H1 (cell line): ENCODE measurements at regions of chr4 and their contacts with region 1.

Region 1: GRCh38 chr4:15197005-15197404 is 194.7 kb downstream of the CPEB2 start:
- DNase-seq: peak in 1 of 2 experiments; percentile 46
- H3K4me3 ChIP-seq: no peak overlapping the region
- H3K27ac ChIP-seq: no peak overlapping the region
- H3K4me1 ChIP-seq: peaks cover 0 to 9% (median 4%) of the 10 kb centered on the region in 4 experiments; a peak in 4 of 7 replicates
- H3K27me3 ChIP-seq: no peaks in the 10 kb centered on the region
- CTCF ChIP-seq: peak in 2 of 3 experiments; percentile 30 to 60; a peak in 2 of 4 replicates
- EP300 ChIP-seq: no peak
- POLR2A ChIP-seq: no peak
- RAD21 ChIP-seq: peak; percentile 62 to 72

Region 2: DNA sequence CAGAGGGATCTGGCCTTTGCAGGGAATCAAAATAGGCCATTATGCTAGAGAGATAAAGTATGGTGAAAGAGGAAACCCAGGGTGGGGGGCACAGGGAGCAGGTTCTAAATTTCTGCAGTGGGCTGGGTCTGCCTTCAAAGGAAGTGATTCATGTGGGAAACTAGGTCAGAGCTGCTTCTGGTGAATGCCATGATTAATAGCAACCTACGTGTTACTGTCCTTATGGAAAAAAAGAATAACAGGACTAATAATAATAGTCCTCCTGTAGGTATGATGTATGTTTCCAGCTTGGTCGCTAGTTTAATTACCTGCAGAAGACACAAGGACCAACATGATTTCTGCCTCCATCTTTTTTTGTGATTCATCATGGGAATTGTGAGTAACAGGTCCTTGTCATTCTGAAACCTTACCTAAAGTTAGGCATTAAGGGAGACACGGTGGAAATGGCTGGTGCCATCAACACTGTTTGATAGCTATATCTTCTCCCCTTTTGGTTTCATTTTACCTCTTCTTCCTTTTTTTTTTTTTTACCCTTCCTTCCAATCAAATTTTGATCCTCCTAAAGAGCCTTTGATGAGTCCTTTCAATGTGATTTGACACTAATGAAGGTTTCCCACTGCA is 14.3 kb before region 1 on chr4:
- CTCF ChIA-PET with region 1: interaction called, 16 read pairs
- POLR2A ChIA-PET with region 1: interaction called, 3 read pairs
- DNase-seq: no peak
- H3K4me3 ChIP-seq: no peak overlapping the region
- H3K27ac ChIP-seq: no peak overlapping the region
- H3K4me1 ChIP-seq: peaks cover 0 to 3% (median 0%) of the 10 kb centered on the region in 4 experiments; a peak in 1 of 7 replicates
- H3K27me3 ChIP-seq: no peaks in the 10 kb centered on the region
- CTCF ChIP-seq: no peak
- EP300 ChIP-seq: no peak
- POLR2A ChIP-seq: no peak
- RAD21 ChIP-seq: no peak

Region 3: DNA sequence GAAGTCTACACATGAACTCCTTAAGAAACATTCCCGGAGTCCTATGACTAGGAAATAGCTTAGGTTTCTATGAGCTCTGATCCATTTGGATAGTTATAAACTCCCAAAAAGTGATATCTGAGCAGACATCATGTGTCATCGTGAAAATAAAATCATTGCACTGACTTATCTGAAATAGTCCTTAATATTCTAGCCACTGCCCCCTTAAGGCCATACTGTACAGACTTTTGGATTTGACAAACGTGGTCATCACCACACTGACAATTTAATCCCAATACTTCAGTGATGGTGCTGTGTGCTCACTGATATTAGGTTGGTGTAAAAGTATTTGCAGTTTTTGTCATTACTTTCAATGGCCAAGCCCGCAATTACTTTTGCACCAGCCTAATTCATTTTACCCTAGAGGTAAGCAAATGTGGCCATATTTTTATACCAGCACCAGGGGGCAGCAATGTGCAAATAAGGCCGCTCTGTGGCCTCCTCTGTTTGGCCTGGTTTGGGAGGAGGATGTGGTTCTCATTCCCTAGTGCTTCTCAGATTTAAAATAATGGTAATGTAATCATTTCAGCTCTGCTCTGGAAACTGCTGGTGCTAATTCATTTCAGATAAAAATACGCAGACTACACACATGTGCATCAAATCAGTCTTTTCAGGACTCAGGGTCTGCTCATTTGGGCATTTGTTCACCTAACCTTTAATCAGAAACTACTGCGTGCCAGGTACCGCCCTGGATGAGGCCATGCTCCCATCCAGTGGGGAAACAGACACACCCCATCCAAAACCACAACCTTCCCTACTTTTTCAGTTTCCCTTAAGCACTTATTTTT is 34.5 kb after region 1 on chr4:
- CTCF ChIA-PET with region 1: interaction called, 13 read pairs
- POLR2A ChIA-PET with region 1: no interaction called
- DNase-seq: peak in 1 of 2 experiments; percentile 83
- H3K4me3 ChIP-seq: no peak overlapping the region
- H3K27ac ChIP-seq: no peak overlapping the region
- H3K4me1 ChIP-seq: no peaks in the 10 kb centered on the region
- H3K27me3 ChIP-seq: no peaks in the 10 kb centered on the region
- CTCF ChIP-seq: peak; percentile 46 to 75 (median 74)
- EP300 ChIP-seq: no peak
- POLR2A ChIP-seq: no peak
- RAD21 ChIP-seq: peak; percentile 73 to 82

Region 4: DNA sequence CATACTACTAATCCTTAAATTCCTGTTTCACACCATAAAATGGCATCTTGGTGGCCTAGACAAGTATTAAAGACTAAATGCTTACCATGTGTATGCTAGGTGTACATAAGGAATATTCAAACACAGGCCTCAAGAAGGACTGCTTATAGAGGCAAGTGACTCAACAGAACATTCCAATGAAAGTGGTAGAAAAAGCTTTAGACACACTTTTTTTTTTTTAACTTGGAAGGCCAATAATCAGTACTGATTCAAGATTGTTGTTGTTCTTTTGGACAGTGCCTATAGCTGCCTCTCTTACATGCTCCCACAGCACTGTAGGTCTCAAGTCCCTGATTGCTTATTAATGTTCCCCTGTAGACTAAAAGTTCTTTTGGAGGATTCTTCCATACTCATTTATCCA is 380.5 kb after region 1 on chr4:
- CTCF ChIA-PET with region 1: no interaction called
- POLR2A ChIA-PET with region 1: no interaction called
- DNase-seq: no peak
- H3K4me3 ChIP-seq: no peak overlapping the region
- H3K27ac ChIP-seq: no peak overlapping the region
- H3K4me1 ChIP-seq: no peaks in the 10 kb centered on the region
- H3K27me3 ChIP-seq: no peaks in the 10 kb centered on the region
- CTCF ChIP-seq: no peak
- EP300 ChIP-seq: no peak
- POLR2A ChIP-seq: no peak
- RAD21 ChIP-seq: no peak